ENCODE measurements at regions of chr12 and their contacts with region 1.

Region 1: DNA sequence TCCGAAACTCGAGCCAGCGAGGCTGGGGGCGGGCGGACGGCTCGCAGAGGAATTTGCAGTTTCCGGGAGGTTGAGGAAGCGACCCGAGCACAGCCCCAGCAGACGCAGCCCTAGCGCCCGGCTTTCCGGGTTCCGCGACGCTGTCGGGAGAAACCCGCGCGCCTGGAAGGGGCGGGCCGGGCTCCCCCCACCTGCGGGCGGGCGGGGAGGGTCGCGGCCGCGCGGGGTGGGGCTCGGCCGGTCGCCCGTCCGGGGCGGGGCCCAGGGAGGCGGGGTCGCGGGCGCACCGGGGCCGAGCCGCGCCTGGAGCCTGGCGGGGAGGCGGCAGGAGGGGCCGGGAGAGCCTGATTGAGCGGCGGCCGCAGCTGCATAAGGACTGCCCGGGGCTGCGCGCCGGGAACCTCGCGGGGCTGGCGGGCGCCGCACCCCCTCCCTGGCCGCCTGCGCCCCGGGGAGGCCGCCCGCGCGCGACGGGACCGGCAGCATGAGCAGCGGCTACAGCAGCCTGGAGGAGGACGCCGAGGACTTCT is at the start of gene RASSF3:
- DNase-seq: peak; percentile 46 to 92 (median 76)
- ATAC-seq: peak; percentile 57
- H3K4me3 ChIP-seq: peak within 1 kb of the TSS; percentile 87
- H3K4me3 Mint-ChIP-seq: peak within 1 kb of the TSS; percentile 98
- H3K27ac ChIP-seq: peak within 1 kb of the TSS; percentile 69 to 86
- H3K27ac Mint-ChIP-seq: peak within 1 kb of the TSS; percentile 93
- H3K4me1 ChIP-seq: peaks cover 38% of the 10 kb centered on the region
- H3K4me1 Mint-ChIP-seq: peaks cover 44% of the 10 kb centered on the region
- H3K27me3 ChIP-seq: no peaks in the 10 kb centered on the region
- H3K27me3 Mint-ChIP-seq: no peaks in the 10 kb centered on the region
- CTCF ChIP-seq: no peak
- total RNA-seq, gene RASSF3: 118 to 127 TPM

Region 2: GRCh38 chr12:64222009-64222765 is 388.0 kb before region 1 on chr12 and contains the start of gene KICS2:
- CTCF ChIA-PET with region 1: no interaction called
- POLR2A ChIA-PET with region 1: interaction called, 6 read pairs
- intact Hi-C with region 1: loop called in 1 of 2 experiments (anchors 10 kb)
- DNase-seq: peak; percentile 79 to 97 (median 88)
- ATAC-seq: peak; percentile 85
- H3K4me3 ChIP-seq: peak within 1 kb of the TSS; percentile 78
- H3K4me3 Mint-ChIP-seq: peak within 1 kb of the TSS; percentile 97
- H3K27ac ChIP-seq: peak within 1 kb of the TSS; percentile 84 to 98
- H3K27ac Mint-ChIP-seq: peak within 1 kb of the TSS; percentile 95
- H3K4me1 ChIP-seq: peaks cover 13% of the 10 kb centered on the region
- H3K4me1 Mint-ChIP-seq: peaks cover 41% of the 10 kb centered on the region
- H3K27me3 ChIP-seq: no peaks in the 10 kb centered on the region
- H3K27me3 Mint-ChIP-seq: peaks cover 12% of the 10 kb centered on the region
- CTCF ChIP-seq: no peak
- total RNA-seq, gene KICS2: 13.6 to 14.0 TPM

Region 3: DNA sequence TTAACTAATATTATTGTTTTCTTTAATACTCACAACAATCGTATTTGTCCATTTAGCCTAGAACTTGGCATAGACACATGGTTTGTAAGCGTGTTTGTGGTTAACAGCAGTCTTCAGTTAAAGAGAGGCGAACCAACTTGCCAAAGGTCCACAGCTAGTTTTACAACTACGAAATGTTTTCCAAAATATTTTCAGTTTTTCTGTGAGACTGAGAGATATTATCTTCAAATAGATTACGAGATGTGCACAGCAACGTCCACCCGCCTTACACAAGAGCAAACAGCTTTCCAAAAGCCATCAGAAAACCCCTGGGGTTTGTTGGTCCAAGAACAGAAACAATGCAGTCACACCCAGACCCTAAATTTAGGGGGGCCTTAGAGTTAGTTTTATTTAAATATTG is 58.5 kb before region 1 on chr12:
- CTCF ChIA-PET with region 1: interaction called, 39 read pairs
- POLR2A ChIA-PET with region 1: interaction called, 13 read pairs
- intact Hi-C with region 1: loop called (anchors 1 to 2 kb)
- DNase-seq: no peak
- ATAC-seq: no peak
- H3K4me3 ChIP-seq: no peak overlapping the region
- H3K4me3 Mint-ChIP-seq: no peak overlapping the region
- H3K27ac ChIP-seq: no peak overlapping the region
- H3K27ac Mint-ChIP-seq: no peak overlapping the region
- H3K4me1 ChIP-seq: no peaks in the 10 kb centered on the region
- H3K4me1 Mint-ChIP-seq: peaks cover 13% of the 10 kb centered on the region
- H3K27me3 ChIP-seq: no peaks in the 10 kb centered on the region
- H3K27me3 Mint-ChIP-seq: no peaks in the 10 kb centered on the region
- CTCF ChIP-seq: no peak

Region 4: DNA sequence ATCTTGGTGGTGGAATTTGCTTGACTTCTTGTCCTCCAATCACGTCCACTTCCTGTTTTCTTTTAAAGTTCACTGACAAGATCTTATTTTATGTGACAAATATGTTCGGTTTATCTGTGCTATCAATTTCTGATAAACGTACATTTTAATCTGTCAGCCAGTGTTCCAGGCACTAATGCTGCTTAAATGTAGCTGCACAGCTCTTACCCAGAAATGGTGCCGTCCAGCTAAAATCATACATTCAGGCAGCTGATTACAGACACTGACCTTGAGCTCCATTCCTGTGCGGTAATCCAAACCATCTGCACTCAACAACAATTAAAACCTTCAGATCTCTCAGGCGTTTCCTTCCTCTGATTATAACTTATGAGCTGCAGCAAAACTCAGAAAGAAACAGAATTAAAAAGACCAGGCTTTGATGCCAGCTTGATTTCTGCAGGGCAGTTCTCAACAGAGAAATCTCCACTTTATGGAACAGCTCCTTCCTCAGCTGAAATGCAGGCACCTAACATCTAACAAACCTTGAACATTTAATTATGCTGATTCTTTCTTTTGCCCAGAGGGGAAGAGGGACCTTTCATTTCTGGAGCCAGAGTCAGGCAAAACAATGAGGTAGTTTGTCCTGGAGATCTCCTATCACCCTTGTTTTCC is 26.3 kb before region 1 on chr12:
- CTCF ChIA-PET with region 1: interaction called, 3 read pairs
- POLR2A ChIA-PET with region 1: interaction called, 41 read pairs
- intact Hi-C with region 1: loop called in 1 of 2 experiments (anchors 2 kb)
- DNase-seq: peak in 3 of 14 experiments; percentile 19 to 34 (median 21)
- ATAC-seq: peak; percentile 26
- H3K4me3 ChIP-seq: peak overlapping the region; percentile 24
- H3K4me3 Mint-ChIP-seq: peak overlapping the region; percentile 80
- H3K27ac ChIP-seq: peak overlapping the region; percentile 7 to 23
- H3K27ac Mint-ChIP-seq: peak overlapping the region; percentile 76
- H3K4me1 ChIP-seq: peaks cover 30% of the 10 kb centered on the region
- H3K4me1 Mint-ChIP-seq: peaks cover 34% of the 10 kb centered on the region
- H3K27me3 ChIP-seq: no peaks in the 10 kb centered on the region
- H3K27me3 Mint-ChIP-seq: no peaks in the 10 kb centered on the region
- CTCF ChIP-seq: no peak

Region 5: DNA sequence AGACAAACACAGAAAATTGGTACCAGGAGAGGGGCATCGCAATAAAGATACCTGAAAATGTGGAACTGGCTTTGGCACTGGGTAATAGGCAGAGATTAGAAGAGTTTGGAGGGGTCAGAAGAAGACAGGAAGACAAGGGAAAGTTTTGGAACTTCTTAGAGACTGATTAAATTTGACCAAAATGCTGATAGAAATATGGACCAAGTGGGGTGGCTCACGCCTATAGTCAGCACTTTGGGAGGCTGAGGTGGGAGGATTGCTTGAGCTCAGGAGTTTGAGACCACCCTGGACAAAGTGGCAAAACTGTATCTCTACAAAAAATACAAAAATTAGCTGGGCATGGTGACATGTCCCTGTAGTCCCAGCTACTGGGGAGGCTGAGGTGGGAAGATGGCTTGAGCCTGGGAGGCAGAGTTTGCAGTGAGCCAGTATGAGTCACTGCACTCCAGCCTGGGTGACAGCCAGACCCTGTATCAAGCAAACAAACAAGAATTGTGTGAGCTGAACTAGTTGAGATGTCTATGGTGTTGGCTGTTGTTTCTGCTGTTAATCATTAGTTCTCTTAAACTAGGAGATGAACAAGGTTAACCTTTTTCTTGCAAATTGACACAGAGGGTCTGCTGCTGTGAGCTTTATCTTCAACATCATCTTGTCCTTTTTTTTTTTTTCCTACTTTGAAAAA is 23.6 kb after region 1 on chr12:
- CTCF ChIA-PET with region 1: interaction called, 7 read pairs
- POLR2A ChIA-PET with region 1: interaction called, 4 read pairs
- intact Hi-C with region 1: loop called in 1 of 2 experiments (anchors 2 kb)
- DNase-seq: peak in 7 of 14 experiments; percentile 38 to 67 (median 43)
- ATAC-seq: peak; percentile 47
- H3K4me3 ChIP-seq: no peak overlapping the region
- H3K4me3 Mint-ChIP-seq: peak overlapping the region; percentile 61
- H3K27ac ChIP-seq: peak overlapping the region in 1 of 2 donors; percentile 57
- H3K27ac Mint-ChIP-seq: peak overlapping the region; percentile 71
- H3K4me1 ChIP-seq: peaks cover 65% of the 10 kb centered on the region
- H3K4me1 Mint-ChIP-seq: peaks cover 82% of the 10 kb centered on the region
- H3K27me3 ChIP-seq: no peaks in the 10 kb centered on the region
- H3K27me3 Mint-ChIP-seq: no peaks in the 10 kb centered on the region
- CTCF ChIP-seq: no peak

Region 6: DNA sequence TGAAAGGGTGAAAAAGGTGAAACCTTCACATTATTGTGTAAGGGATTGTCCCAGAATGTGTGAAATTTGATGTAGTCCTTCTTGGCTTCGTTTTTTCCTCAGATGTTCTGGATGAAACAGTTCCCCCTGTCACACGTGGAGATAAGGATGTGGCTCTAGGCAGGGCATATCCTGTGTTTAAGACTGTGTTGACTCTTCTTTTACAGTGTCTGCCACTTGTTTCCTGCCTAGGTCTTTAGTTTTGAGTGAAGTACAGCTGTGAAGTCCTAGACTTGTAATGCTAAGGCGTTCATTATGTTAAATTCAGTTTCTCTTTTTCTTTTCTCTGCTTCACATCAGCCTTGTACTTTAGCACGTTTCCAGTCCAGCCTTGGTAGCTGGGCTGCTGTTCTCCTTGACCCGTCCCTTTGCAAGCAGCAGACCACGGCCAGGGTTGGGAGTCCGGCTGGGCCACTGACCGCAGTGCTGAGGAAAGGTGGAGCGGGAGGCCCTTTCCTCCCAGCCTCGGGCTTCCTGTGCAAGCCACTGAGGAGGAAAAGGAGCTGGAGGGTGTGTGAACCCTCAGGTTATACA is 59.1 kb after region 1 on chr12:
- CTCF ChIA-PET with region 1: interaction called, 10 read pairs
- POLR2A ChIA-PET with region 1: interaction called, 137 read pairs
- intact Hi-C with region 1: loop called in 1 of 2 experiments (anchors 1 kb)
- DNase-seq: peak in 13 of 14 experiments; percentile 23 to 93 (median 48)
- ATAC-seq: peak; percentile 81
- H3K4me3 ChIP-seq: peak overlapping the region; percentile 59
- H3K4me3 Mint-ChIP-seq: peak overlapping the region; percentile 91
- H3K27ac ChIP-seq: peak overlapping the region; percentile 82 to 91
- H3K27ac Mint-ChIP-seq: peak overlapping the region; percentile 98
- H3K4me1 ChIP-seq: peaks cover 87% of the 10 kb centered on the region
- H3K4me1 Mint-ChIP-seq: peaks cover 94% of the 10 kb centered on the region
- H3K27me3 ChIP-seq: no peaks in the 10 kb centered on the region
- H3K27me3 Mint-ChIP-seq: no peaks in the 10 kb centered on the region
- CTCF ChIP-seq: no peak

Region 7: DNA sequence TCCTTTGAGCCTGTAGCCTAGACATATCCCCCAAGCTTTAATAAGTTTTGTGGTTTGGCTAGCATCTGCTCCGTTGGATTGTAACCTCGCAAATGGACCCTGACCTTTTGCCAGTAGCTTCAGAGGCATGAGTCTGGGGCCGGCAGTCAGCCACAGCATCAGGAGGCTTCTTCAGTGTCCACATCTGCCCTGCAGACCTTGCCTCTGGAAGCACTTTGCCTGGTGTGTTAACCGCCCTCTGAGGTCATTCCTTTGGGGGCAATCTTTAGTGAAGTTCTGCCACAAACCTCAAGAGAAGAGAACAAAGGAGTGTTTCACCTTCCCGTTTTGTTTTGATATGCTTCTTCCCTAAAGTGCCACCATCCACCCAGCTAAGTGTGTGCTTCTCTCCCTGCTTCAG is 77.6 kb after region 1 on chr12:
- CTCF ChIA-PET with region 1: interaction called, 4 read pairs
- POLR2A ChIA-PET with region 1: interaction called, 137 read pairs
- intact Hi-C with region 1: no loop called
- DNase-seq: peak in 3 of 14 experiments; percentile 34 to 40 (median 37)
- ATAC-seq: no peak
- H3K4me3 ChIP-seq: no peak overlapping the region
- H3K4me3 Mint-ChIP-seq: peak overlapping the region; percentile 36
- H3K27ac ChIP-seq: peak overlapping the region; percentile 42 to 58
- H3K27ac Mint-ChIP-seq: peak overlapping the region; percentile 98
- H3K4me1 ChIP-seq: peaks cover 97% of the 10 kb centered on the region
- H3K4me1 Mint-ChIP-seq: peaks cover 73% of the 10 kb centered on the region
- H3K27me3 ChIP-seq: no peaks in the 10 kb centered on the region
- H3K27me3 Mint-ChIP-seq: no peaks in the 10 kb centered on the region
- CTCF ChIP-seq: no peak

Measured in CD4-positive, alpha-beta T cell (primary cell).